CD14-positive monocyte (primary cell): ENCODE measurements at regions of chr20 and their contacts with region 1.

Region 1: DNA sequence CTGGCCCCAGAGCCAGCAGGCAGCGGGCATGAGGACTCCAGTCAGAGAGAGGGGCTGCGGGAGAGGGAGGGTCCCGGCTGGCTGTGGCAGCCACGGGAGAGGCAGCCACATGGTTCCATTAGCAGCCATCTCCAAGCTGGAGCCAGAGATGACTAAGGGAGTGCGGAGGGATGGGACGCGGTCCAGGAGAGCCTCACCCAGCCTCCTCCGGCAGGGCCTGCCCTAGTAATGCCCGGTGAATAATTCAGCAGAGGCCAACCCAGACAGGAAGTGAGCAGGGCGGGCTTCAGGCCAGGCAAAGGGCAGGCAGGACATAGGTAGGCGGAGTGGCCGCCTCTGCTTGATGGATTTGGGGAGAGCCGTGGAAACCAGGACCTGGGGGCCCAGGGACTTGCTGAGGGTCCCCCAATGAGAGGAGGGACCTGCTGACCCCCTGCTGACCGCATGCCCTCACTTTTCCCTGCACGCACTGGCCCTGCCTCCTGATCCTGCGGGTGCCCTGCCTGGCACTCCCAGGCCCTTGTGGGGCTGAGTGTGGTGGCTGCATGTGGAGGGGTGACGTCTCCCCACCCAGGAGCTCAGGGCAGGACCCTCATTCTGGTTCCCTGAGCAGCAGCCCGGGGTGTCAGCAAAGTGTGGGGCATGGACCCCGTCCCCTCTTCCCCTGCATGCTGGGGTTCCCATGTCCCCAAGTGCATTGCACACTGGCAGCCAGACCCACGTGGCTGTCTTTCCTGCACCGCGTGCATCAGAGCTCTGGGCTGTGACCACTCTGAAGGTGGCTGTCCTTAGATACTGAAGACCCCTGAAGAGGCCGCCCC is 51.8 kb upstream of the SLCO4A1 start:
- DNase-seq: no peak
- H3K4me3 ChIP-seq: no peak overlapping the region
- H3K4me3 Mint-ChIP-seq: no peak overlapping the region
- H3K27ac ChIP-seq: no peak overlapping the region
- H3K27ac Mint-ChIP-seq: no peak overlapping the region
- H3K4me1 ChIP-seq: peaks cover 6 to 12% of the 10 kb centered on the region in 2 donors
- H3K4me1 Mint-ChIP-seq: peaks cover 11% of the 10 kb centered on the region
- H3K27me3 ChIP-seq: peaks cover 0 to 6% of the 10 kb centered on the region in 2 donors
- H3K27me3 Mint-ChIP-seq: peaks cover 22 to 32% (median 29%) of the 10 kb centered on the region in 3 donors
- CTCF ChIP-seq: no peak

Region 2: GRCh38 chr20:62508603-62509051 is 81.9 kb before region 1 on chr20:
- intact Hi-C with region 1: loop called in 1 of 2 experiments (anchors 5 kb)
- DNase-seq: no peak
- H3K4me3 ChIP-seq: no peak overlapping the region
- H3K4me3 Mint-ChIP-seq: no peak overlapping the region
- H3K27ac ChIP-seq: no peak overlapping the region
- H3K27ac Mint-ChIP-seq: no peak overlapping the region
- H3K4me1 ChIP-seq: no peaks in the 10 kb centered on the region
- H3K4me1 Mint-ChIP-seq: no peaks in the 10 kb centered on the region
- H3K27me3 ChIP-seq: peaks cover 2 to 24% of the 10 kb centered on the region in 2 donors
- H3K27me3 Mint-ChIP-seq: peaks cover 18 to 21% (median 18%) of the 10 kb centered on the region in 3 donors
- CTCF ChIP-seq: no peak

Region 3: GRCh38 chr20:62551407-62552323 is 38.8 kb before region 1 on chr20:
- intact Hi-C with region 1: no loop called
- DNase-seq: no peak
- H3K4me3 ChIP-seq: no peak overlapping the region
- H3K4me3 Mint-ChIP-seq: peak overlapping the region in 1 of 2 donors; percentile 67
- H3K27ac ChIP-seq: no peak overlapping the region
- H3K27ac Mint-ChIP-seq: no peak overlapping the region
- H3K4me1 ChIP-seq: peaks cover 0 to 8% of the 10 kb centered on the region in 2 donors
- H3K4me1 Mint-ChIP-seq: peaks cover 6% of the 10 kb centered on the region
- H3K27me3 ChIP-seq: peaks cover 17 to 64% of the 10 kb centered on the region in 2 donors
- H3K27me3 Mint-ChIP-seq: peaks cover 48 to 66% (median 64%) of the 10 kb centered on the region in 3 donors
- CTCF ChIP-seq: no peak